PC-9 (cell line): ENCODE measurements at regions of chr12 and their contacts with region 1.

Region 1: GRCh38 chr12:96208346-96208745 is 14.2 kb downstream of the ELK3 start:
- DNase-seq: peak in 1 of 2 experiments; percentile 72
- H3K4me3 ChIP-seq: no peak overlapping the region
- H3K27ac ChIP-seq: peak overlapping the region; percentile 50
- H3K4me1 ChIP-seq: peaks cover 19% of the 10 kb centered on the region
- H3K27me3 ChIP-seq: no peaks in the 10 kb centered on the region
- CTCF ChIP-seq: no peak

Region 2: GRCh38 chr12:96157427-96157826 is 50.9 kb before region 1 on chr12:
- CTCF ChIA-PET with region 1: interaction called, 12 read pairs
- POLR2A ChIA-PET with region 1: no interaction called
- intact Hi-C with region 1: no loop called
- DNase-seq: peak; percentile 11 to 51
- H3K4me3 ChIP-seq: no peak overlapping the region
- H3K27ac ChIP-seq: no peak overlapping the region
- H3K4me1 ChIP-seq: peaks cover 4% of the 10 kb centered on the region
- H3K27me3 ChIP-seq: no peaks in the 10 kb centered on the region
- CTCF ChIP-seq: no peak

Region 3: GRCh38 chr12:96263449-96263902 is 55.1 kb after region 1 on chr12:
- CTCF ChIA-PET with region 1: no interaction called
- POLR2A ChIA-PET with region 1: no interaction called
- intact Hi-C with region 1: no loop called
- DNase-seq: no peak
- H3K4me3 ChIP-seq: no peak overlapping the region
- H3K27ac ChIP-seq: no peak overlapping the region
- H3K4me1 ChIP-seq: no peaks in the 10 kb centered on the region
- H3K27me3 ChIP-seq: no peaks in the 10 kb centered on the region
- CTCF ChIP-seq: no peak

Region 4: DNA sequence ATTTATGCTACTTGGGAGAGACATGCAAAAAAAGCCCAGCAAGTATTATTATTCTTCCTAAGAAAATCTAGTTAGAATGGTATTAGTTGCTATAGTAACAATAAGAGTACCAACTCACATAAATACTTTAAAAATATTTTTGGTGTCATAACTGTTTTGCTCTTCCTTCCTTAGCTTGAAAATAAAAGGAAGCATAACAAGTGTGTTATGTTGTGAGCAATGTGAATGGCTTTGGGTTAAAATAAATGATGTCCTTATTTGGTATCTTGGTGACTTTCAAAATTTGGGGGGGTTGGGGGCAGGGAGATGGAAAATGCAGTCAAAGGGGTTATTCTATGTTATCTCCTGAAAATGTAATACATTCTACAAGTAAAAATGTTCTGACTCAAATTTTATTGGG is 76.8 kb after region 1 on chr12:
- CTCF ChIA-PET with region 1: no interaction called
- POLR2A ChIA-PET with region 1: no interaction called
- intact Hi-C with region 1: no loop called
- DNase-seq: no peak
- H3K4me3 ChIP-seq: no peak overlapping the region
- H3K27ac ChIP-seq: no peak overlapping the region
- H3K4me1 ChIP-seq: no peaks in the 10 kb centered on the region
- H3K27me3 ChIP-seq: no peaks in the 10 kb centered on the region
- CTCF ChIP-seq: no peak

Region 5: DNA sequence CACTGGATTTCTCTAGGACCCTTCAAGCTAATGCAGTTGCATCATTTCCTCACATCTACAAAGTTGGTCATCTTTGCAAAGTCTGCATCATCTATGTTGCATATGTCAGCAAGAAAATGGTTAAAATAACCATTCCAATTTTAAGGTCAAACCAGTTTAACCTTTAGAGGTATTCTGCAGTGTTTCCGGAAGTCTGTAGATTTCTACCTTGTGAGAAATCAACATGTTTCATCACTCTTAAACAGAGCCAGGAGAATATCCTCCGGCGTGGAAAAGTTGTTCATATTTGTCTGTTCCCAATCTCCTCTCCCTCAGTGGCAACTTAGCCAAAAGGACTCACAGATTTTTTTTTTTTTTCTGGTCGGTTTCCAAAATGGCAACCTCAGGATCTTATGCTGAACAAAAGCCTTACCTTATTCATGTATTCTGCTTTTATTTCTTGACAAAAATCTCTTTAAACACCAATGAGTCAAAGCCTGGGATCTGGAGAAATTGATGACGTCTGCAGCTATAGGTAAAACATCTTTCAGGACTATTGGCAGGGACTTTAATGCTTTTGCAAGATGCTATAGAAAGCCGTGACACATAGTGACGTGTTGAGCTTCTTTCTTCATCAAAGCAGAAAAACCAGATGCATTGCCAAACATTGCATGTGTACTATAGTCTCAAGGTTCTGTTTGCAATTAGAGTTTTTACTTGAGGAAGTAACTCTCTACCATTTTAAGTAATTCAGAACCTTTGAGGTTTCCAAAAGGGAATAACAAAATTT is 207.9 kb after region 1 on chr12:
- CTCF ChIA-PET with region 1: no interaction called
- POLR2A ChIA-PET with region 1: no interaction called
- intact Hi-C with region 1: no loop called
- DNase-seq: peak; percentile 14 to 92
- H3K4me3 ChIP-seq: peak overlapping the region; percentile 46; the same call in 1 of the 2 replicates
- H3K27ac ChIP-seq: peak overlapping the region; percentile 99
- H3K4me1 ChIP-seq: peaks cover 45% of the 10 kb centered on the region
- H3K27me3 ChIP-seq: no peaks in the 10 kb centered on the region
- CTCF ChIP-seq: no peak

Region 6: GRCh38 chr12:97482143-97482693 is 1273.9 kb after region 1 on chr12:
- CTCF ChIA-PET with region 1: no interaction called
- POLR2A ChIA-PET with region 1: interaction called, 14 read pairs
- intact Hi-C with region 1: no loop called
- DNase-seq: no peak
- H3K4me3 ChIP-seq: no peak overlapping the region
- H3K27ac ChIP-seq: no peak overlapping the region
- H3K4me1 ChIP-seq: no peaks in the 10 kb centered on the region
- H3K27me3 ChIP-seq: no peaks in the 10 kb centered on the region
- CTCF ChIP-seq: no peak